K562 (cell line): ENCODE measurements at regions of chr16 and their contacts with region 1.

Region 1: GRCh38 chr16:15427648-15428239 is 6.6 kb upstream of the BMERB1 start:
- DNase-seq: peak; percentile 31 to 76 (median 47)
- ATAC-seq: peak; percentile 96
- H3K4me3 ChIP-seq: no peak overlapping the region
- H3K27ac ChIP-seq: no peak overlapping the region
- H3K4me1 ChIP-seq: no peaks in the 10 kb centered on the region; a peak in 1 of 5 replicates
- H3K27me3 ChIP-seq: peaks cover 5 to 18% of the 10 kb centered on the region in 2 experiments; a peak in 3 of 5 replicates
- CTCF ChIP-seq: peak; percentile 60 to 77 (median 66)
- EP300 ChIP-seq: no peak
- POLR2A ChIP-seq: no peak
- RAD21 ChIP-seq: peak; percentile 75 to 81

Region 2: DNA sequence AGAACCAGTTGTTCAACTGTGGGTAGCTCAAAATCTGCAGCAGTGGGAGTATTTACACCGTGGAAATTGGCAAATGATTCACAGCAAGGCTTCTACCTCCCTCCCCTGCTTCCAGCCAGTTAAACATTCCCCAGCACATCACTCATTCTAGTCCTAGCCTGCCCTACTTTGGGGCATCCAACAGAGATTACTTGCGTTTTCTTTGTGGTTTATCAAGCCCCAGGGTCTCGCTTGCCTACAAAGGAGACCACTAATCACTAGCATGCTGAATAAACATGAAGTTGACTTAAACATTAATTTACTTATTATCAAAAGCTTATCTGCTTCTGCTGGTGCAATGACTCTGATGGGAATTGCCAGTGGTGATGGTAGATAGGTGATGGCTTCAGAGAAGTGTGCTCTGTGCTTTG is 120.7 kb after region 1 on chr16:
- CTCF ChIA-PET with region 1: interaction called, 10 read pairs
- POLR2A ChIA-PET with region 1: no interaction called
- in situ Hi-C with region 1: no loop called
- intact Hi-C with region 1: loop called (anchors 2 kb)
- DNase-seq: no peak
- ATAC-seq: no peak
- H3K4me3 ChIP-seq: no peak overlapping the region
- H3K27ac ChIP-seq: no peak overlapping the region
- H3K4me1 ChIP-seq: peaks cover 10 to 16% of the 10 kb centered on the region in 2 experiments
- H3K27me3 ChIP-seq: no peaks in the 10 kb centered on the region
- CTCF ChIP-seq: no peak
- EP300 ChIP-seq: no peak
- POLR2A ChIP-seq: no peak
- RAD21 ChIP-seq: no peak

Region 3: DNA sequence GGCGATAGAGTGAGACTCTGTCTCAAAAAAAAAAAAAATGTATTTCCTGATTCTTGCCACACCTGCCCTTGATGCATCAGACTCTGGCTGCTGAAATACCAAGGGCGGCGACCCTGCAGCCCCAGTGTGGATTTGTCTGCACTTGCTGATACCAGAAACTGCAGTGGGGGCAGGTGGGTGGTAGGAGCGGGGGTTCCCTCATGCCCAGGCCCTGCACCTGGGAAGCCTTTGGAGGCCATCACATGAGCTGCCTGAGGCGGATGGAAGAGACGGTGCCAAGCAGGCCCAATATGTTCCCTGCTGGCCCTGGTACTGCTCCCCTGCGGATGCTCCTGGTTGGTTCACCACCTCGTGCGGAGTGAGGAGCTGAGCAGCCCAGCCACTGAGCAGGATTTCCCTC is 164.6 kb after region 1 on chr16:
- CTCF ChIA-PET with region 1: no interaction called
- POLR2A ChIA-PET with region 1: no interaction called
- in situ Hi-C with region 1: no loop called
- intact Hi-C with region 1: no loop called
- DNase-seq: no peak
- ATAC-seq: no peak
- H3K4me3 ChIP-seq: no peak overlapping the region
- H3K27ac ChIP-seq: peak overlapping the region; percentile 37; the same call in 1 of the 3 replicates
- H3K4me1 ChIP-seq: peaks cover 28 to 41% of the 10 kb centered on the region in 2 experiments
- H3K27me3 ChIP-seq: no peaks in the 10 kb centered on the region
- CTCF ChIP-seq: no peak
- EP300 ChIP-seq: no peak
- POLR2A ChIP-seq: no peak
- RAD21 ChIP-seq: no peak

Region 4: GRCh38 chr16:15704545-15704987 is 276.8 kb after region 1 on chr16:
- CTCF ChIA-PET with region 1: no interaction called
- POLR2A ChIA-PET with region 1: no interaction called
- in situ Hi-C with region 1: loop called (anchors 10 kb)
- intact Hi-C with region 1: loop called (anchors 2 kb)
- DNase-seq: peak; percentile 84 to 89 (median 86)
- ATAC-seq: peak; percentile 97
- H3K4me3 ChIP-seq: no peak overlapping the region
- H3K27ac ChIP-seq: no peak overlapping the region
- H3K4me1 ChIP-seq: peaks cover 0 to 5% of the 10 kb centered on the region in 2 experiments; a peak in 2 of 5 replicates
- H3K27me3 ChIP-seq: no peaks in the 10 kb centered on the region
- CTCF ChIP-seq: peak; percentile 63 to 91 (median 87)
- EP300 ChIP-seq: no peak
- POLR2A ChIP-seq: no peak
- RAD21 ChIP-seq: peak; percentile 62 to 85